ENCODE measurements at regions of chr3 and their contacts with region 1.

Region 1: GRCh38 chr3:14402304-14402811 is at the start of gene SLC6A6:
- DNase-seq: peak; percentile 97
- ATAC-seq: peak; percentile 82
- H3K4me3 Mint-ChIP-seq: peak within 1 kb of the TSS; percentile 92
- H3K27ac Mint-ChIP-seq: peak within 1 kb of the TSS; percentile 95
- H3K4me1 Mint-ChIP-seq: peaks cover 36% of the 10 kb centered on the region
- H3K27me3 Mint-ChIP-seq: no peaks in the 10 kb centered on the region
- CTCF ChIP-seq: no peak
- total RNA-seq, gene SLC6A6: 43.4 to 48.8 TPM

Region 2: DNA sequence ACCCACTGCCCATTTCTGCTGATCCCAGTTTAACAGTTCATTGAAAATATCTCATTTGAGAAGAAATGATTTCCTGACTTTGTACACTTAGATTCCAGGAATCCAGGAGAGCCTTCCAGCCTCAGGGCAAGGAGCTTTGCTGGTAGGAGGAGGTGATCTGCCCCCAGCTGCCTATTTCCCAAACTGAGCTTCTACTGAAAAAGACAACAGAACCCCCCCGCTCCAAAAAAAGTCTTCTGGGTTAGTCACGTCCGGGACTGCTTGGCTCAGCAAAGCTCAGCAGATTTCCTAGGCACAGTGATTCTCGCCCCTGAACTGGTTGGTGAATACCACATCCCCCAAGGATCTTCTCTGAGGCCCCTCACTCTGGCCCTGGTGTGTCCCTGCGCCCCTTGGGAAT is 13.1 kb after region 1 on chr3:
- CTCF ChIA-PET with region 1: no interaction called
- POLR2A ChIA-PET with region 1: interaction called, 15 read pairs
- intact Hi-C with region 1: no loop called
- DNase-seq: no peak
- ATAC-seq: no peak
- H3K4me3 Mint-ChIP-seq: no peak overlapping the region
- H3K27ac Mint-ChIP-seq: no peak overlapping the region
- H3K4me1 Mint-ChIP-seq: peaks cover 17% of the 10 kb centered on the region
- H3K27me3 Mint-ChIP-seq: no peaks in the 10 kb centered on the region
- CTCF ChIP-seq: no peak

Region 3: DNA sequence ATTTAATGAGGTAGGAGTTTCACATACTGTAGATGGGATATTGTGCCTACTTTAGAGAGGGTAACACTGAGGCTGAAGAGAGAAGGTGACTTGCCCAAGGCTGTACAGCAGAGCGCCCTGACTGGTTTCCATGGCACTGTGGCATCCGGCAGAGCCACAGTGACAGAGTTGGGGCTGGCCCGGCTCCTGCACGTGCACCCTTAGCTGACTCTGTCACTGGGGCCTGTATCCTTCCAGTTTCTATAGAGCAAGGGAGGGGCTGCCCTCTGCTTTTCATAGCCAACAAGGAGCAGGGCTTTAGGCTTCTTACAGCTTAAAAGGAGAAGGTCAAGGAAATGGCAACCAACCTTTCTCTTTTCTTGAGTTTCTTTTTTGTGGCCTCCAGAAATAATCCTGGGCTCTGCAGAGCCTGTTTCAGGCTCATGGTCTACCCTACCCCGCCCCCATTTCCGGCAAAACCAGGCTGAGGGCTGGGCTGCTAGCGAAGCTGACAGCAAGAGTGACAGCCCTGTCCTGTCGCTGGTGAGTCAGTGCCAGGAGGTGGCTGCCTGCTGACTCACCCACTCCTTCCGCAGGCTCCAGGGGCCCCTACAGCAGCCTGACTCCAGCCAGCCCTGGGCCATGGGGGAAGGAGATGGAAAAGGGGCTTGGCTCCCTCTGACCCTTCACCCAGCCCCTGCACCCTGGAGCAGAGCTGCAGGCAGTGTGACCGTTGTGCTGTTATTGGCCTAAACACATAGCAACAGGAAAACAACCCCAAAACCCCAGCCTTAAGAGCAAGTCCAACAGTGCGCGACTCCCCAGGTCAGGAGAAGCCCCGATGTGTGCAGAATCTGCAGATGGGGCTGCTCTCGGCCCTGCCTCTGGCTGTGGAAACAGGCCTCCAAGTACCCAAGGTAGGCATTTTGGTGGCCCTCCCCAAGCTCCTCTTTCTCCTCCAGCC is 29.8 kb after region 1 on chr3:
- CTCF ChIA-PET with region 1: interaction called, 7 read pairs
- POLR2A ChIA-PET with region 1: interaction called, 112 read pairs
- intact Hi-C with region 1: loop called (anchors 2 kb)
- DNase-seq: peak; percentile 98
- ATAC-seq: peak; percentile 87
- H3K4me3 Mint-ChIP-seq: peak overlapping the region; percentile 65
- H3K27ac Mint-ChIP-seq: peak overlapping the region; percentile 94
- H3K4me1 Mint-ChIP-seq: peaks cover 84% of the 10 kb centered on the region
- H3K27me3 Mint-ChIP-seq: no peaks in the 10 kb centered on the region
- CTCF ChIP-seq: no peak

Region 4: DNA sequence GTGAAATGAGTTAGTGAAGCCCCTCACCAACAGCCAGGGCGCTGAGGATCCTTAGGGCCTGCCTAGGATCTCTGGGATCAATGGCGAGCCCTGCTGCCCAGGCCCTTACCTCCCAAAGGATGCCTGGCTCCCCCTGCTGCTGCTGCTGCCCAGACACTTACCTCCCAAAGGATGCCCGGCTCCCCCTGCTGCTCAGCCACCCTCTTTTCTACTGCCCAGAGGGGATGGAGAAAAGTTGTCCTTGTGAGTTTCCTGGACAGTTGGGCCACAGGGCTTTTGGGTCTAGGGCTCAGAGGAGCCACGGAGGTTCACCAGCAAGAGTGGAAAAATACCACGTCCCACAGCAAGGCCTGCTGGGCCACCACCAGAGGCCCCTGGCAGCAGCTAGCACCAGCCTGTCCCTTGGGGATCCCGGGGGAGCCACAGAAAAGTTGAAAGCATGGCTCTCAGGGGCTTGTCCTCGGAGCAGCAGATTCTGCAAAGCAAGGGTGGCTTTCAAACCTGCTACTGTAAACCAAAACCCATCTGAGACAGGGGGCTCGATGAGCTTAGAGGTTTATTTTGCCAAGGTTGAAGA is 59.5 kb after region 1 on chr3:
- CTCF ChIA-PET with region 1: interaction called, 12 read pairs
- POLR2A ChIA-PET with region 1: interaction called, 4 read pairs
- intact Hi-C with region 1: loop called (anchors 10 kb)
- DNase-seq: peak; percentile 54
- ATAC-seq: peak; percentile 48
- H3K4me3 Mint-ChIP-seq: no peak overlapping the region
- H3K27ac Mint-ChIP-seq: peak overlapping the region; percentile 35
- H3K4me1 Mint-ChIP-seq: peaks cover 27% of the 10 kb centered on the region
- H3K27me3 Mint-ChIP-seq: no peaks in the 10 kb centered on the region
- CTCF ChIP-seq: no peak

Region 5: DNA sequence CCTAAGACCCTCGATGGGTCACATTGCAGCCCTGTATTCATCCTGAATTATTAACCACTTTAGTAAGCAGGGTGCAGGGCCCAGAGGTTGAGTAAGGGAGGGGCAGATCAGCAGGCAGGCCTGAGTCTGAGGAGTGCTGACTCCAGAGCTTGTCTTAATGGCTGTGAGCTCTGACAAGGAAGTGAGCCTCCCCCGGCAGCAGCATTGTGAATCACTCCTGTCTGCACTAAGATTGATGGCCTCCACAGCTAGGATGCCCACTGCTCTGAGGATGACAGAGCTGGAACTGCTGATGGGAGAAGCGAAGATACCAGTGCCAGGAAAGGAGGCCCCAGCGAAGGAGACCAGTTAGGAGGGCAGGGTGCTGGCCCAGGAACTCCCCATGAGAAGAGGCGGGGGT is 202.7 kb after region 1 on chr3:
- CTCF ChIA-PET with region 1: no interaction called
- POLR2A ChIA-PET with region 1: no interaction called
- intact Hi-C with region 1: no loop called
- DNase-seq: no peak
- ATAC-seq: no peak
- H3K4me3 Mint-ChIP-seq: no peak overlapping the region
- H3K27ac Mint-ChIP-seq: no peak overlapping the region
- H3K4me1 Mint-ChIP-seq: peaks cover 2% of the 10 kb centered on the region
- H3K27me3 Mint-ChIP-seq: peaks cover 51% of the 10 kb centered on the region
- CTCF ChIP-seq: no peak

Measured in activated CD8-positive, alpha-beta T cell treated with anti-CD3 and anti-CD28 coated beads for 36 hours (primary cell).